IMR-90 (cell line): ENCODE measurements at regions of chr1 and their contacts with region 1.

Region 1: GRCh38 chr1:43743206-43743605 is 35.9 kb downstream of the ST3GAL3 start:
- DNase-seq: no peak
- ATAC-seq: no peak
- H3K4me3 ChIP-seq: no peak overlapping the region
- H3K27ac ChIP-seq: no peak overlapping the region
- H3K4me1 ChIP-seq: no peaks in the 10 kb centered on the region
- H3K27me3 ChIP-seq: no peaks in the 10 kb centered on the region
- CTCF ChIP-seq: no peak
- POLR2A ChIP-seq: no peak
- RAD21 ChIP-seq: no peak

Region 2: DNA sequence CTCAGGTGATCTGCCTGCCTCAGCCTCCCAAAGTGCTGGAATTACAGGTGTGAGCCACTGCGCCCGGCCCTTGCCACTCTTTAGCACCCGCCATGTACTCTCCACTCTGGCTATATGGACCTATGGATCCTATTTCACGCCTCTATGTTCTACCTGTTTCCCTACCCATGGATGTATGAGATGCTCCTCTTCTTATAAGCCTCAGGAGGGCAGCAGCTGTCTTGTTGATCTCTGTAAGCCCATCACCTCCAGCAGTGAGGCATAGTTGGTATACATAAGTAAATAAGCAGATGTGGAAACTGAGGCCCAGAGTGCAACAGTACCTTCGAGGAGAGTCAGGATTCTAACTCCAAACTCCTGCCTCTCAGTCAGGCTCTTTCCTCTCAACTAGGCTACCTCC is 165.7 kb after region 1 on chr1:
- CTCF ChIA-PET with region 1: no interaction called
- POLR2A ChIA-PET with region 1: no interaction called
- dilution Hi-C with region 1: no loop called
- in situ Hi-C with region 1: no loop called
- intact Hi-C with region 1: no loop called
- DNase-seq: no peak
- ATAC-seq: no peak
- H3K4me3 ChIP-seq: no peak overlapping the region
- H3K27ac ChIP-seq: no peak overlapping the region
- H3K4me1 ChIP-seq: peaks cover 9% of the 10 kb centered on the region; the same call in 1 of the 2 replicates
- H3K27me3 ChIP-seq: no peaks in the 10 kb centered on the region
- CTCF ChIP-seq: no peak
- POLR2A ChIP-seq: no peak
- RAD21 ChIP-seq: no peak

Region 3: DNA sequence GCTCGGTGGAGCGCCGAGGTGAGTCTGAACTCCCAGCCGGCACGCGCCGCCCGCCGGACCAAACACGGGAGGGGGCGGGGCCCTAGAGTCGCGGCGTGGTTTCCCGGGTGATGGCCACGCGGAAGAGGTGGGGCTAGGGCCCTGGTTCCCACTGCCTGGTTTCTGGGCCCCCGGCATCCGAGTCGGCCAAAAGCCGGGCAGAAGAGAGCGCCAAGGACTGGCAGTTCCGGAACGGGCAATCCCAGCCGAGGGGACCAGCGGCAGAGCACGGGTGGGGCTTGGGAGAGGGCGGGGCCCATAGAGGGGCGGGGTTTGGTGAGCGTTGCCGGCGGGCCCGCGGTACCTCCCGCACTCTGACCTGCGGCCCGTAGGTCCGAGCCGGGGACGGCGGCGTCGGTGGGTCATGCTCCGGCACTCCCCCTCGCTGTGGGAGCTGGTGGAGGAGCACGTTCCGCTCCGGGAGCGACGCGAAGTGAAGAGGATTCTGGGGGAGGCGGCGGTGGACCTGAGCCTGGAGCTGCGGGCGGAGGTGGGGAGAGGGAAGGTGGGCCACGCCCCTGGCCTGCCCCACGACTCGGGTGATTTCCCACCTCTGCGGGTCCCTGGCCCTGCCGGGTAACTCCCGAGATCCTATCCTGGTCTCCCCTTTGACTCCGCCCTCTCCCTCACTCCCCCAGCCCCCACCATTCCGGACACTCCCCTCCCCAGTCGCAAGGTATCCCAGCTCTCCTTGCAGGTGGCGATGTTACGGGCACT is 248.4 kb after region 1 on chr1 and contains the start of gene CCDC24:
- CTCF ChIA-PET with region 1: no interaction called
- POLR2A ChIA-PET with region 1: interaction called, 13 read pairs
- dilution Hi-C with region 1: no loop called
- in situ Hi-C with region 1: no loop called
- intact Hi-C with region 1: no loop called
- DNase-seq: peak; percentile 67
- ATAC-seq: peak; percentile 86
- H3K4me3 ChIP-seq: peak within 1 kb of the TSS; percentile 75
- H3K27ac ChIP-seq: peak within 1 kb of the TSS; percentile 13; the same call in 1 of the 2 replicates
- H3K4me1 ChIP-seq: peaks cover 11% of the 10 kb centered on the region
- H3K27me3 ChIP-seq: no peaks in the 10 kb centered on the region
- CTCF ChIP-seq: no peak
- POLR2A ChIP-seq: no peak
- RAD21 ChIP-seq: no peak
- total RNA-seq, gene CCDC24: 1.4 and 1.7 TPM in 2 replicates